ENCODE measurements at regions of chr1 and their contacts with region 1.

Region 1: GRCh38 chr1:118716782-118717181 is 271.4 kb downstream of the TBX15 start:
- DNase-seq: no peak
- H3K4me3 ChIP-seq: no peak overlapping the region
- H3K4me3 Mint-ChIP-seq: no peak overlapping the region
- H3K27ac Mint-ChIP-seq: no peak overlapping the region
- H3K4me1 ChIP-seq: no peaks in the 10 kb centered on the region
- H3K4me1 Mint-ChIP-seq: no peaks in the 10 kb centered on the region
- H3K27me3 ChIP-seq: no peaks in the 10 kb centered on the region
- H3K27me3 Mint-ChIP-seq: no peaks in the 10 kb centered on the region
- CTCF ChIP-seq: peak in 1 of 2 experiments; percentile 32

Region 2: GRCh38 chr1:118223426-118223825 is 493.4 kb before region 1 on chr1:
- CTCF ChIA-PET with region 1: no interaction called
- POLR2A ChIA-PET with region 1: no interaction called
- intact Hi-C with region 1: loop called (anchors 1 kb)
- DNase-seq: peak in 1 of 2 experiments; percentile 44
- H3K4me3 ChIP-seq: no peak overlapping the region
- H3K4me3 Mint-ChIP-seq: no peak overlapping the region
- H3K27ac Mint-ChIP-seq: no peak overlapping the region
- H3K4me1 ChIP-seq: no peaks in the 10 kb centered on the region
- H3K4me1 Mint-ChIP-seq: no peaks in the 10 kb centered on the region
- H3K27me3 ChIP-seq: no peaks in the 10 kb centered on the region
- H3K27me3 Mint-ChIP-seq: no peaks in the 10 kb centered on the region
- CTCF ChIP-seq: peak; percentile 25 to 38

Region 3: DNA sequence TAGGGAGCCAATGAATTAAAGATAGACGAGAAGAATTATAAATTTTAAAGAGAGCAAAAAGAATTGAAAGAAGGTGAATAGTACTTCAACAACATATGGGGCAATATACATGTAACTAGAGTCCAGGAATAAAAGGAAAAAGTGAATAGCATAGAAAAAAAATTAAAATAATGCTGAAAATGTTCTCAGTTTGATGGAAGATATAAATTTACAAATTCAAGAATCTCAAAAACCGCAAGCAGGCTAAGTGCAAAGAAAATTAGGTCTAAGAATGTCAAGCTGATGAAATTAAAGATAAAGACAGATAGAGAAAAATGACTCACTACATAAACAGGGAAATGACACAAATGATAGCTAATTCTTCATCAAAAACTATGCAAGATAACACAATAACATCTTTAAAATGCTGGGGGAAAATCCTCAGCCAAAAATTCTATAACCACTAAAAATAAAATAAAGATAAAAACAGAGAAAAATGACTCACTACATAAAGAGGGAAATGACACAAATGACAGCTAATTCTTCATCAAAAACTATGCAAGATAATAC is 54.9 kb before region 1 on chr1:
- CTCF ChIA-PET with region 1: no interaction called
- POLR2A ChIA-PET with region 1: no interaction called
- intact Hi-C with region 1: no loop called
- DNase-seq: no peak
- H3K4me3 ChIP-seq: no peak overlapping the region
- H3K4me3 Mint-ChIP-seq: no peak overlapping the region
- H3K27ac Mint-ChIP-seq: no peak overlapping the region
- H3K4me1 ChIP-seq: no peaks in the 10 kb centered on the region
- H3K4me1 Mint-ChIP-seq: no peaks in the 10 kb centered on the region
- H3K27me3 ChIP-seq: no peaks in the 10 kb centered on the region
- H3K27me3 Mint-ChIP-seq: no peaks in the 10 kb centered on the region
- CTCF ChIP-seq: no peak

Region 4: GRCh38 chr1:118688891-118689290 is 27.9 kb before region 1 on chr1:
- CTCF ChIA-PET with region 1: no interaction called
- POLR2A ChIA-PET with region 1: no interaction called
- intact Hi-C with region 1: no loop called
- DNase-seq: no peak
- H3K4me3 ChIP-seq: no peak overlapping the region
- H3K4me3 Mint-ChIP-seq: no peak overlapping the region
- H3K27ac Mint-ChIP-seq: no peak overlapping the region
- H3K4me1 ChIP-seq: no peaks in the 10 kb centered on the region
- H3K4me1 Mint-ChIP-seq: no peaks in the 10 kb centered on the region
- H3K27me3 ChIP-seq: no peaks in the 10 kb centered on the region
- H3K27me3 Mint-ChIP-seq: no peaks in the 10 kb centered on the region
- CTCF ChIP-seq: no peak

Region 5: GRCh38 chr1:118739421-118739970 is 22.7 kb after region 1 on chr1:
- CTCF ChIA-PET with region 1: no interaction called
- POLR2A ChIA-PET with region 1: no interaction called
- intact Hi-C with region 1: loop called (anchors 1 kb)
- DNase-seq: no peak
- H3K4me3 ChIP-seq: no peak overlapping the region
- H3K4me3 Mint-ChIP-seq: no peak overlapping the region
- H3K27ac Mint-ChIP-seq: no peak overlapping the region
- H3K4me1 ChIP-seq: no peaks in the 10 kb centered on the region
- H3K4me1 Mint-ChIP-seq: no peaks in the 10 kb centered on the region
- H3K27me3 ChIP-seq: no peaks in the 10 kb centered on the region
- H3K27me3 Mint-ChIP-seq: peaks cover 6% of the 10 kb centered on the region
- CTCF ChIP-seq: no peak

Region 6: DNA sequence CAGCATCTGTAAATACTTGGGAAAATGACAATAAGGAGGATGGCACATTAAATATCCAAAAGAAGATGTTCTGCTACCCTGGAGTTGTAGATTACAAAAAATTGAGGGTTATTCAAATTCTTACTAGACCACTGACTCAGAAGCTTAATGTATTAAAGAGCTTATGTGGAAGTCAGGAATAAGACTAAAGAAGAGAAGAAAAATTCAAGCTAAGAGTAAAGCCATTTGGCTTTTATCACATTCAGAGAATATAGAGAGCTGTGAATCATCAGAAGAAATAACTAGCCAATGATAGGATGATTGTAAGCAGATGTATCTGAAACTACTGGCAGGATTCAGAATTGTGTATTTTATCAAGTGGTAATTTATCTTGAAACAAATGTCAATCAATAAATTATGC is 34.4 kb after region 1 on chr1:
- CTCF ChIA-PET with region 1: no interaction called
- POLR2A ChIA-PET with region 1: no interaction called
- intact Hi-C with region 1: no loop called
- DNase-seq: no peak
- H3K4me3 ChIP-seq: no peak overlapping the region
- H3K4me3 Mint-ChIP-seq: no peak overlapping the region
- H3K27ac Mint-ChIP-seq: no peak overlapping the region
- H3K4me1 ChIP-seq: no peaks in the 10 kb centered on the region
- H3K4me1 Mint-ChIP-seq: no peaks in the 10 kb centered on the region
- H3K27me3 ChIP-seq: no peaks in the 10 kb centered on the region
- H3K27me3 Mint-ChIP-seq: peaks cover 4% of the 10 kb centered on the region
- CTCF ChIP-seq: no peak

Region 7: GRCh38 chr1:119147661-119148090 is 430.9 kb after region 1 on chr1:
- CTCF ChIA-PET with region 1: no interaction called
- POLR2A ChIA-PET with region 1: no interaction called
- intact Hi-C with region 1: no loop called
- DNase-seq: no peak
- H3K4me3 ChIP-seq: no peak overlapping the region
- H3K4me3 Mint-ChIP-seq: no peak overlapping the region
- H3K27ac Mint-ChIP-seq: no peak overlapping the region
- H3K4me1 ChIP-seq: no peaks in the 10 kb centered on the region
- H3K4me1 Mint-ChIP-seq: no peaks in the 10 kb centered on the region
- H3K27me3 ChIP-seq: no peaks in the 10 kb centered on the region
- H3K27me3 Mint-ChIP-seq: no peaks in the 10 kb centered on the region
- CTCF ChIP-seq: no peak